ENCODE measurements at regions of chr16 and their contacts with region 1.

Region 1: DNA sequence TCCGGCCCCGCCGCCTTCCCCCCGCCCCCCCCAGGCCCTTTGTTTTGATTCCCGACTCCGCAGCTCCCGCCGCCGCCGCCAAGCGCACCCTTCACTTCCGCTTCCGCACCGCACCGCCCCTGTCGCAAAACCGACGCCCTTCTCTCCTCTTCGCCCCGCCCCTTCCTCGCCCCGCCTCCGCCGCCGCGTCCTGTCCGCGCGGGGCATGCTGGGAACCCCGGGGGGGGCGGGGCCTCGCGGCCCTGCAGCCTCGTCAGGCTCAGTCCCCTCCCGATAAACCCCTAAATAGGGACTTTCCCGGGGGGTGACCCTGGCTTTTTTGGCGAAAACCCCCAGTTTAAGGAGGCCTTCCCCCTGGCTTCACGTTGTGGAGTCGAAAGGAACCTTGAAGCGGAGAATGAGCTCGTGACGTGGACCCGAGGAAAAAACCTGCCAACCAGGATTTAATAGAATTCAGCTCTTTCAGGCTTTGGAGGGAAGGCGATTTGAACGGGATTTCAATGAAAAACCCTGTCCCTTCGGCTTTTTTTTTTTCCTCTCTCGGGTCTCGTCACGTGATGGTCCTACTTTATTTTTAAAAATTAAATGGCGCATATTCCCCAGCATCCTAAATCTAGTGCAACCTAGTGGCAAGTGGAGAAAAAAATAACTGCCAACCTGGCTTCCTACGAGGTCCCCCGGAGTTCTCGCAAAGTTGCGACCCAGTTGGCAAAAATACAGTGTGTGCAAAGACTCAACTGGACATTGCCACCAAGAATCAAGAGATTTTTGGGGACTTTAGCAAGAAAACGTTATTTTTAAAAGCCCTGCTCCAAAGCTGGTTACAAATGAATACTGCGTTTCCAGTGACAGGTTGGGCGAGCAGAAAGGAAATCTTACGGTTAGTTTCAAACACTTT is at the start of gene MARF1:
- DNase-seq: peak; percentile 99 to 100 (median 99)
- H3K4me3 ChIP-seq: peak within 1 kb of the TSS; percentile 95 to 100
- H3K4me3 Mint-ChIP-seq: peak within 1 kb of the TSS; percentile 87 to 95 (median 92)
- H3K27ac ChIP-seq: peak within 1 kb of the TSS; percentile 91
- H3K27ac Mint-ChIP-seq: peak within 1 kb of the TSS; percentile 99
- H3K4me1 ChIP-seq: peaks cover 50% of the 10 kb centered on the region
- H3K4me1 Mint-ChIP-seq: peaks cover 31 to 57% (median 41%) of the 10 kb centered on the region in 4 donors
- H3K27me3 ChIP-seq: no peaks in the 10 kb centered on the region
- H3K27me3 Mint-ChIP-seq: no peaks in the 10 kb centered on the region
- total RNA-seq, gene MARF1: 223 to 235 TPM

Region 2: DNA sequence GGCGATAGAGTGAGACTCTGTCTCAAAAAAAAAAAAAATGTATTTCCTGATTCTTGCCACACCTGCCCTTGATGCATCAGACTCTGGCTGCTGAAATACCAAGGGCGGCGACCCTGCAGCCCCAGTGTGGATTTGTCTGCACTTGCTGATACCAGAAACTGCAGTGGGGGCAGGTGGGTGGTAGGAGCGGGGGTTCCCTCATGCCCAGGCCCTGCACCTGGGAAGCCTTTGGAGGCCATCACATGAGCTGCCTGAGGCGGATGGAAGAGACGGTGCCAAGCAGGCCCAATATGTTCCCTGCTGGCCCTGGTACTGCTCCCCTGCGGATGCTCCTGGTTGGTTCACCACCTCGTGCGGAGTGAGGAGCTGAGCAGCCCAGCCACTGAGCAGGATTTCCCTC is 51.0 kb before region 1 on chr16:
- CTCF ChIA-PET with region 1: interaction called, 14 read pairs
- POLR2A ChIA-PET with region 1: interaction called, 71 read pairs
- intact Hi-C with region 1: no loop called
- DNase-seq: peak in 3 of 5 donors; percentile 7 to 48 (median 23)
- H3K4me3 ChIP-seq: no peak overlapping the region
- H3K4me3 Mint-ChIP-seq: peak overlapping the region in 2 of 8 donors; percentile 6 to 26
- H3K27ac ChIP-seq: no peak overlapping the region
- H3K27ac Mint-ChIP-seq: peak overlapping the region; percentile 57 to 93 (median 79)
- H3K4me1 ChIP-seq: peaks cover 37% of the 10 kb centered on the region
- H3K4me1 Mint-ChIP-seq: peaks cover 16 to 58% (median 36%) of the 10 kb centered on the region in 4 donors
- H3K27me3 ChIP-seq: no peaks in the 10 kb centered on the region
- H3K27me3 Mint-ChIP-seq: no peaks in the 10 kb centered on the region

Region 3: DNA sequence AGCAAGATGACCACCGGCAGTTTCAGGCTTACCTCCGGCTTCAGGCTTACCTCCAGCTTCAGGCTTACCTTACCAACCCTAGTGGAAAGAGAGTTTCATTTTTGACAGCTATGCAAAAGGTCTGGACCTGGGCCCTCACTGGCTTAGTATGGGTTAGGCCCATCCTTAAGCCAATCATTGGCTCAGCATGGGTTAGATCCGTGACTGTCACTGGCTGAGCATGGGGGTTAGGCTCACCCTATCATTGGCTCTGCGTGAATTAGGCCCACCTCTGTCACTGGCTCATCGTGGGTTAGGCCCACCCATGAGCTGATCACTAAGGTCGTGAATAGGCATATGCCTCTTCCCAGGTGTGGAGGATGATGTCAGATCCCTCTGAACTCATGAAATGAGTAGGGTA is 14.9 kb after region 1 on chr16:
- CTCF ChIA-PET with region 1: interaction called, 25 read pairs
- POLR2A ChIA-PET with region 1: interaction called, 54 read pairs
- intact Hi-C with region 1: no loop called
- DNase-seq: no peak
- H3K4me3 ChIP-seq: no peak overlapping the region
- H3K4me3 Mint-ChIP-seq: peak overlapping the region in 2 of 8 donors; percentile 13 to 23
- H3K27ac ChIP-seq: no peak overlapping the region
- H3K27ac Mint-ChIP-seq: peak overlapping the region; percentile 77 to 87 (median 79)
- H3K4me1 ChIP-seq: peaks cover 68% of the 10 kb centered on the region
- H3K4me1 Mint-ChIP-seq: peaks cover 43 to 73% (median 61%) of the 10 kb centered on the region in 4 donors
- H3K27me3 ChIP-seq: no peaks in the 10 kb centered on the region
- H3K27me3 Mint-ChIP-seq: no peaks in the 10 kb centered on the region

Region 4: DNA sequence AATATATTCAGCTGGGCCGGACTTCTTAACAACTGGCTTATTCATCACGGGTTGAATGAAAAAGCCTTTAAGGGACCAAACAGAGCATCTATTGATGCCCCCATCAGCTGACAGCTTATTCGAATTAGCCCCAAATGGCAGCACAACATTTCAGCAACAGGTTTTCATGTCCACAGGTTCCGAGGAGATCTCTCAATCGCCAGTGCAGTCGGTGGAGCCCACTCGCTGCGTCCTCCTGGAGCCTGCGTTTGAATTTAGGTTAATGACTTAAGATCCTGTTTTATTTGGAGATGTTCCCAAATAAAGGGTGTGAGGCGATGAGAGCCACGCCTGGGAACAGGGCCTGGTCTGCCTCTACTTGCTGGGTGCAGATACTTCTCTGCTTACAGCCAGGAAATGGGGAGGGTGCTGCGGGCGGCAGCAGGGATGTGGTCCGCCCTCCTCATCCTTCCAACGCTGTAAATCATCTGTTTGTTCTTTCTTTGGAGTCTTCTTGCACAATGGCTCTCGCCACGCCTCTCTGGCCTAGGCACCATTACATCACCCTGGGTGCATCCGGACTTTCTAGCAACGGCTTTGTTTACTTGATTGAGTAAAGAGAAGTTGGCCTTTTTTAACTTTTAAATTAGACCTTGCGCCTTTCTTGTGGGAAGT is 29.3 kb after region 1 on chr16:
- CTCF ChIA-PET with region 1: interaction called, 31 read pairs
- POLR2A ChIA-PET with region 1: interaction called, 83 read pairs
- intact Hi-C with region 1: loop called (anchors 1 kb)
- DNase-seq: peak; percentile 86 to 94 (median 91)
- H3K4me3 ChIP-seq: no peak overlapping the region
- H3K4me3 Mint-ChIP-seq: peak overlapping the region; percentile 23 to 80 (median 76)
- H3K27ac ChIP-seq: peak overlapping the region; percentile 91
- H3K27ac Mint-ChIP-seq: peak overlapping the region; percentile 87 to 99 (median 98)
- H3K4me1 ChIP-seq: peaks cover 51% of the 10 kb centered on the region
- H3K4me1 Mint-ChIP-seq: peaks cover 31 to 60% (median 47%) of the 10 kb centered on the region in 4 donors
- H3K27me3 ChIP-seq: no peaks in the 10 kb centered on the region
- H3K27me3 Mint-ChIP-seq: no peaks in the 10 kb centered on the region

Region 5: GRCh38 chr16:15888072-15888976 is 245.0 kb after region 1 on chr16 and contains the start of gene CEP20:
- CTCF ChIA-PET with region 1: no interaction called
- POLR2A ChIA-PET with region 1: no interaction called
- intact Hi-C with region 1: loop called (anchors 5 kb)
- DNase-seq: peak; percentile 99 to 100 (median 100)
- H3K4me3 ChIP-seq: peak within 1 kb of the TSS; percentile 94 to 99
- H3K4me3 Mint-ChIP-seq: peak within 1 kb of the TSS; percentile 98 to 100 (median 100)
- H3K27ac ChIP-seq: peak within 1 kb of the TSS; percentile 88
- H3K27ac Mint-ChIP-seq: peak within 1 kb of the TSS; percentile 96 to 100 (median 99)
- H3K4me1 ChIP-seq: peaks cover 30% of the 10 kb centered on the region
- H3K4me1 Mint-ChIP-seq: peaks cover 21 to 39% (median 31%) of the 10 kb centered on the region in 4 donors
- H3K27me3 ChIP-seq: no peaks in the 10 kb centered on the region
- H3K27me3 Mint-ChIP-seq: no peaks in the 10 kb centered on the region
- total RNA-seq, gene CEP20: 22.3 to 30.4 TPM

Region 6: DNA sequence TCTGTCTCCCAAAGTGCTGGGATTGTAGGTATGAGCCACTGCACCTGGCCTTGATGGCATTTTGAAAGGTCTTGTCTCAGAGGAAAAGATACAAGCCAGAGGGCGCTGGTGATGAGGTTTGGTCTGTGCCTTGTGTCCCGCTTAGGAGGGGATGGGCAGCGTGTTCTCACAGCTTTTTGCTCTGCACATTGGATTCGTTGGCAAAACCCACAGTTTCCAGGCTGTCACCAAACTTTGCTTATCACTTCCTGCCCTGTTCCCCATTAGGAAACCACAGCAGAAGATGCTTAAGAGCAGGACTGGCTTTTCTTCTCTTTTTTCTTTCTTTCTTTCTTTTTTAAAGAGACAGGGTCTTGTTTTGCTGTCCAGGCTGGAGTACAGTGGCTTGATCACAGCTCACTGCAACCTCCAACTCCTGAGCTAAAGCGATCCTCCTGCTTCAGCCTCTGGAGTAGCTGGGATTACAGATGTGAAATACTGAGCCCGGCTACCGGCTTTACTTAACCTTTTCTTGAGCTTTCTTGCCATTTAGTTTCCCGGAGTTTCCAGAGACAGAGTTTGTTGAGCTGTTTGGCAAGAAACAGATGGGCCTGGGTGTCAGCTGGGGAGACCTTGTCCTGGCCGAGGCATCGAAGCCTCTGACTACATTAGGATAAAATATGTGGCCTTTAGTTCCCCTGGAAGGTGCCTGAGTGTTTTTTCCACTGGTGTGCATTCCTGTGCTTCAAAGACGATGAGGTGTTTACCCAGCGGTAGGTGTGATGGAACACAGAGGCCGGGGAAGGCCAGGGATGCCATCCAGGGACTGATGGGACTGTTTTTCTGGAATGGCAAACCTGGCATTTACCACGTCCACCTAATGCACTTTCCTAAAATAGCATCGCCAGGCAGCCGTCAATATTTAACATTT is 419.0 kb after region 1 on chr16:
- CTCF ChIA-PET with region 1: no interaction called
- POLR2A ChIA-PET with region 1: no interaction called
- intact Hi-C with region 1: no loop called
- DNase-seq: peak in 4 of 5 donors; percentile 17 to 29 (median 22)
- H3K4me3 ChIP-seq: no peak overlapping the region
- H3K4me3 Mint-ChIP-seq: peak overlapping the region in 2 of 8 donors; percentile 15 to 58
- H3K27ac ChIP-seq: no peak overlapping the region
- H3K27ac Mint-ChIP-seq: peak overlapping the region in 5 of 7 donors; percentile 29 to 88 (median 75)
- H3K4me1 ChIP-seq: peaks cover 22% of the 10 kb centered on the region
- H3K4me1 Mint-ChIP-seq: peaks cover 19 to 30% (median 23%) of the 10 kb centered on the region in 4 donors
- H3K27me3 ChIP-seq: no peaks in the 10 kb centered on the region
- H3K27me3 Mint-ChIP-seq: no peaks in the 10 kb centered on the region

Measured in CD4-positive, alpha-beta memory T cell (primary cell).